ENCODE measurements at regions of chr5 and their contacts with region 1.

Region 1: DNA sequence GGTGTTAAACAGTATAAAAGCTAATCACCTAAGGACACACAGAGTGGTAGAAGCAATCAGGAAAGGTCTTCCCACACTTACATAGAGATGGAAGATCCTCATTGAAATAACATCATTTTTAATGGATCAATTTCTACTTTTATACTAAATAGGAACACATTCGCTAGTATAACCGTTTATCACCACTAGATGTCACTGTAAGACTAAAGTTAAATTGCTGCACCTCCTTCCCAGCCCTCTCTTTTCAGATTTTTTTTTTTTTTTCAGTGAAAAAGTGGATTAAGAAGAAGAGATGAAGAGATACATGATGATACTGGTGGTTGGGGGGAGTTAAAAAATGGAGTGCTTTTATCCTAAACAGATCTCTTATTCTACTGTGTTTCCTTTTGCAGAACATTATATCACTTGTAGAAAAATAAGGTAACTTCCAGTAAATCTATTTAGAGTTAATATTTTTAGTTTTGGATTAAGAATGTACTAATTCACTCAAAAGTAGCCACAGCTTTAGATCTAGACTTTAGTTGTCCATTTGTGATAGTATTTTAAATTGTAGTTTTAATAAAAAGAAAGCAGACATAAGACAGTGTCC is 116.9 kb upstream of the ARRDC3 start:
- DNase-seq: no peak
- H3K4me3 Mint-ChIP-seq: no peak overlapping the region
- H3K27ac Mint-ChIP-seq: no peak overlapping the region
- H3K4me1 Mint-ChIP-seq: peaks cover 2% of the 10 kb centered on the region
- H3K27me3 Mint-ChIP-seq: no peaks in the 10 kb centered on the region

Region 2: DNA sequence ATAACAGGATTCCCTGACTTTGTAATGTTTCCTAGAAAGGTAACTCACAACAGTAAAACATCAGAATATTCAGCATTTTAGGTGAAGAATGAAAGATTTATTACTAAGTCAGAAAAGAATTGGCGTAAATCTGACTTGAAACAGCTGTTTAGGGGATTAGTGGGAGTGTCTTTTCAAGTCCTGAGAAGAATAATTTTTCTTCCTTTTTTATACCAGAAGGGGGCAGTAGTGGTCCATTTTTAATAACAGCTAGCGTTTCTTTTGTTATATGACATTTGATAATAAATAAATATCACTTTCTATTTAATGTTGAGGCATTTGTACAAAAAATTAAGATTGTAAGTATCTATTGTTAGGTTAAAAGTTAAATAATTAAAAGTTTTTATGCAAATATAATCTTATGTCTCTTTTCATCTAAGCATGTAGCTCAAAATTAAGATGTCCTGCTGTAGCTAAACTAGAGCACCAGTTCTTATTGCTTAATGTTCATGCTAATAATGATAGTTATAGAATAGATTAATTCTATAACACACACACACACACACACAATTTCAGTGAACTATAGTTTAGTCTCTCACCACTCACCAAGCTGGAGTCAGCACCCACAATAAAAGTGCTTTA is 141.8 kb after region 1 on chr5:
- CTCF ChIA-PET with region 1: interaction called, 13 read pairs
- intact Hi-C with region 1: loop called (anchors 1 kb)
- DNase-seq: no peak
- H3K4me3 Mint-ChIP-seq: no peak overlapping the region
- H3K27ac Mint-ChIP-seq: no peak overlapping the region
- H3K4me1 Mint-ChIP-seq: no peaks in the 10 kb centered on the region
- H3K27me3 Mint-ChIP-seq: peaks cover 1% of the 10 kb centered on the region

Measured in activated naive CD4-positive, alpha-beta T cell treated with anti-CD3 and anti-CD28 coated beads for 36 hours (primary cell).